ENCODE measurements at regions of chr11 and their contacts with region 1.

Region 1: DNA sequence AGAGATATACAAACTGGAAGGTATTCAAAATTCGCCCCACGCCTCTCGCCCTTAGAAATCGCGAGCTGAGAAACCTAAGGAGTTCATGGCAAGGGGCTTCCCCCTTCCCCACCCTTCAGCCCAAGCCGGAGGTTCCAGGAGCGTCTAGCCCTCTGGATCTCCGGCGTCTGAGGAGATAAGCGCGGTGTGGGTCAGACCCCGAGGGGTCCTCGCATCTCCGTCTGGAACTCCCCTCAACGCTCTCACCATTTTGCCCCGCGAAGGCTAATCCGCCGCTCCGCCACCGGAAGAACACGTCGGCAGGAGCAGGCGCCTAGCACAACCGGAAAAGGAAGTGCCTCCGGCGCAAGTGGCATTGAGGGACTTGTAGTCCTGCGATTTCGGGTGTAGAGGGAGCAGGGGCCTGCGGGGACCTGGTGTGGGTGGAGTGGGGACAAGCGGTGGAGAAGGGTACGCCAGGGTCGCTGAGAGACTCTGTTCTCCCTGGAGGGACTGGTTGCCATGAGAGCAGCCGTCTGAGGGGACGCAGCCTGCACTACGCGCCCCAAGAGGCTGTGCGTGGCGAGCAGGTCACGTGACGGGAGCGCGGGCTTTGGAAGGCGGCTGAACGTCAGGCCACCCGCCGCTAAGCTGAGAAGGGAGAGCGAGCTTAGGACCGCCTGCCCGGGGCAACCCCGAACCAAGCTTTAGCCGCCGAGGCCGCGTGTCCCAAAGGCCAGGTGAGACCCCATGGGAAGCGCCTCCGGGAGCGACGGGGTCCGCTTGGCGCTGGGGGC is at the starts of genes FEN1 and TMEM258:
- DNase-seq: peak; percentile 71 to 94 (median 88)
- ATAC-seq: peak; percentile 87
- H3K4me3 ChIP-seq: peak within 1 kb of the TSS; percentile 64 to 92
- H3K4me3 Mint-ChIP-seq: peak within 1 kb of the TSS; percentile 93
- H3K27ac ChIP-seq: peak within 1 kb of the TSS; percentile 88 to 96
- H3K27ac Mint-ChIP-seq: peak within 1 kb of the TSS; percentile 97
- H3K4me1 ChIP-seq: peaks cover 15% of the 10 kb centered on the region
- H3K4me1 Mint-ChIP-seq: peaks cover 37% of the 10 kb centered on the region
- H3K27me3 ChIP-seq: no peaks in the 10 kb centered on the region
- H3K27me3 Mint-ChIP-seq: no peaks in the 10 kb centered on the region
- CTCF ChIP-seq: no peak
- total RNA-seq, gene FEN1: 12.9 to 15.2 TPM
- total RNA-seq, gene TMEM258: 48.1 to 53.9 TPM

Region 2: GRCh38 chr11:61718621-61719302 is 73.7 kb before region 1 on chr11:
- CTCF ChIA-PET with region 1: no interaction called
- POLR2A ChIA-PET with region 1: no interaction called
- intact Hi-C with region 1: no loop called
- DNase-seq: no peak
- ATAC-seq: no peak
- H3K4me3 ChIP-seq: no peak overlapping the region
- H3K4me3 Mint-ChIP-seq: no peak overlapping the region
- H3K27ac ChIP-seq: no peak overlapping the region
- H3K27ac Mint-ChIP-seq: no peak overlapping the region
- H3K4me1 ChIP-seq: no peaks in the 10 kb centered on the region
- H3K4me1 Mint-ChIP-seq: no peaks in the 10 kb centered on the region
- H3K27me3 ChIP-seq: no peaks in the 10 kb centered on the region
- H3K27me3 Mint-ChIP-seq: no peaks in the 10 kb centered on the region
- CTCF ChIP-seq: no peak

Region 3: GRCh38 chr11:61776551-61777075 is 15.9 kb before region 1 on chr11:
- CTCF ChIA-PET with region 1: interaction called, 5 read pairs
- POLR2A ChIA-PET with region 1: interaction called, 6 read pairs
- intact Hi-C with region 1: loop called in 1 of 2 experiments (anchors 1 kb)
- DNase-seq: peak in 7 of 9 experiments; percentile 34 to 68 (median 59)
- ATAC-seq: peak; percentile 48
- H3K4me3 ChIP-seq: peak overlapping the region in 1 of 2 experiments; percentile 52
- H3K4me3 Mint-ChIP-seq: peak overlapping the region; percentile 69
- H3K27ac ChIP-seq: no peak overlapping the region
- H3K27ac Mint-ChIP-seq: peak overlapping the region; percentile 35
- H3K4me1 ChIP-seq: peaks cover 20% of the 10 kb centered on the region
- H3K4me1 Mint-ChIP-seq: peaks cover 12% of the 10 kb centered on the region
- H3K27me3 ChIP-seq: no peaks in the 10 kb centered on the region
- H3K27me3 Mint-ChIP-seq: peaks cover 2% of the 10 kb centered on the region
- CTCF ChIP-seq: peak; percentile 63

Region 4: DNA sequence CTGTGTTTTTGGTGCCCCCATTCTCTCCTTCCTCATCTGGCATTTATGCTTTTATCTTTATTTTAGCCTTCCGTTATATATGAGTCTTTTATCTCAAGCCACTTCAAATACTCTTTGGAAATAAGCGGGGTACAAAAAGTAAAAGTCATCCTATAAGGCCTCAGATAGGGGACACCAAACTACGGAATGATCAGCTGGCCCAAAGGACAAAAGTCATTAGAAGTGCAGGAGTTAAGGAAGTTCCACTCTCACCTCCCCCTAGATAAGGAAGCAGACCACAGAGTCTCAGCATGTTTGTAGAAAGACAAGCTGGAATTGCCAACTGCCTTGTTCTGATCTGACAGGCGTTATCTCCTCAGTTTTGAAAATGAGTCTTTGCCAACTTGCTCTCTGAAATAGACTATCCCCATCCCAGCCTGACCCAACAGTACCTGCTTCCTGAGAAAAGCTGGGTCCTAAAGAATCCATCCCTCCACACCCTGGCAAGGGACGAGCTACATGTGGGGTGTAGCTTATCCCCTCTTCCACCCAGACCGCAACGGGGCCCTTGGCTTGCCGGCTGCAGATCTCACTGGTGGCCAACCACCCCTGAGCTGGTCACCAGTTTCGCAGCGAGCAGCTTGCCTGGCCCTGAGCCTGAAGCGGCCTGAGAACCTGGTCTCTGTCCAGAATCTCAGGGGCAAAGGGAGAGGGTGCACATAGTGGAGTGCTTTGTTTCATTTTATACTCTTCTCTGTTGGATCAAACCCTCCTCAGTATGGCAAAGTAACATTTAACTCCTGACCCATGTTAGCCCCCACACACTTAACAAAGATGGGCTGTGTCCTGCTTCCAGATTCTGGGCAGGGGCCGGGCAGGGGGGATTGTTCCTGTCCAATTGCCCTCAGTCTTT is 49.4 kb after region 1 on chr11:
- CTCF ChIA-PET with region 1: interaction called, 10 read pairs
- POLR2A ChIA-PET with region 1: interaction called, 3 read pairs
- intact Hi-C with region 1: no loop called
- DNase-seq: no peak
- ATAC-seq: no peak
- H3K4me3 ChIP-seq: no peak overlapping the region
- H3K4me3 Mint-ChIP-seq: no peak overlapping the region
- H3K27ac ChIP-seq: no peak overlapping the region
- H3K27ac Mint-ChIP-seq: no peak overlapping the region
- H3K4me1 ChIP-seq: no peaks in the 10 kb centered on the region
- H3K4me1 Mint-ChIP-seq: peaks cover 3% of the 10 kb centered on the region
- H3K27me3 ChIP-seq: no peaks in the 10 kb centered on the region
- H3K27me3 Mint-ChIP-seq: no peaks in the 10 kb centered on the region
- CTCF ChIP-seq: no peak

Region 5: DNA sequence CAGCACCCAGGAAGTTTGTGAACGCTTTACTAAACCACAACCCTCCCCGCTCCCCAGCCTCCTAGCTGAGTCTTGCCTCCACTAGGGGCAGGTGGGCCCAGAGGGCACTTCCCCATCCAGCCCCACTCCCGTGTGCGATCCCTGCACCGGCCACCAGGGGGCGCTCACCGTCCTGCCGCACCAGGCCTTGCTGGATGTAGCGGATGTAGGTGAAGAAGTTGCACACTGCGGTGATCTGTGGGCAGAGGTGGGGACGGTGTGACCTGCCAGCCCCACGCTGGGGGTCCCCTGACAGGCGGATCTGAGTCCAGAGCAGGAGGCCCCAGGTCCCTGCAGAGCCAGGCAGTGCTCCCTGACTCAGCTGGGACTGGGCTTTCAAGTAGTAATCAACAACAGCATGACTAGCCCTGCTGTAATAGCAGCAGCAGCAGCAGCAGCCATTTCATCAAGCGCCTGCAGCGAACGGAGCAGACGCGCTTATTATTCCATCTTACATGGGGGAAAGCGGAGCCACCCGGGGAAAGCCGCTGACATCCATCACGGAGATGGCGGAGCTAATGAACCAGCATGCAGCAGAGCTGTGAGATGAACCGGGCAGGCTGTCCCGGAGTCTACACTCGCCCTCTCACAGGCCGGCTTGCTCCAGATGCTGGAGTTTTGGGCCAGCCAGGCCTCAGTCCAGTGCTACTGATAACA is 106.8 kb after region 1 on chr11:
- CTCF ChIA-PET with region 1: interaction called, 69 read pairs
- POLR2A ChIA-PET with region 1: interaction called, 3 read pairs
- intact Hi-C with region 1: loop called (anchors 1 kb)
- DNase-seq: peak; percentile 89 to 98 (median 92)
- ATAC-seq: peak; percentile 96
- H3K4me3 ChIP-seq: no peak overlapping the region
- H3K4me3 Mint-ChIP-seq: no peak overlapping the region
- H3K27ac ChIP-seq: no peak overlapping the region
- H3K27ac Mint-ChIP-seq: peak overlapping the region; percentile 3
- H3K4me1 ChIP-seq: peaks cover 5% of the 10 kb centered on the region
- H3K4me1 Mint-ChIP-seq: peaks cover 6% of the 10 kb centered on the region
- H3K27me3 ChIP-seq: no peaks in the 10 kb centered on the region
- H3K27me3 Mint-ChIP-seq: peaks cover 5% of the 10 kb centered on the region
- CTCF ChIP-seq: peak; percentile 98

Region 6: DNA sequence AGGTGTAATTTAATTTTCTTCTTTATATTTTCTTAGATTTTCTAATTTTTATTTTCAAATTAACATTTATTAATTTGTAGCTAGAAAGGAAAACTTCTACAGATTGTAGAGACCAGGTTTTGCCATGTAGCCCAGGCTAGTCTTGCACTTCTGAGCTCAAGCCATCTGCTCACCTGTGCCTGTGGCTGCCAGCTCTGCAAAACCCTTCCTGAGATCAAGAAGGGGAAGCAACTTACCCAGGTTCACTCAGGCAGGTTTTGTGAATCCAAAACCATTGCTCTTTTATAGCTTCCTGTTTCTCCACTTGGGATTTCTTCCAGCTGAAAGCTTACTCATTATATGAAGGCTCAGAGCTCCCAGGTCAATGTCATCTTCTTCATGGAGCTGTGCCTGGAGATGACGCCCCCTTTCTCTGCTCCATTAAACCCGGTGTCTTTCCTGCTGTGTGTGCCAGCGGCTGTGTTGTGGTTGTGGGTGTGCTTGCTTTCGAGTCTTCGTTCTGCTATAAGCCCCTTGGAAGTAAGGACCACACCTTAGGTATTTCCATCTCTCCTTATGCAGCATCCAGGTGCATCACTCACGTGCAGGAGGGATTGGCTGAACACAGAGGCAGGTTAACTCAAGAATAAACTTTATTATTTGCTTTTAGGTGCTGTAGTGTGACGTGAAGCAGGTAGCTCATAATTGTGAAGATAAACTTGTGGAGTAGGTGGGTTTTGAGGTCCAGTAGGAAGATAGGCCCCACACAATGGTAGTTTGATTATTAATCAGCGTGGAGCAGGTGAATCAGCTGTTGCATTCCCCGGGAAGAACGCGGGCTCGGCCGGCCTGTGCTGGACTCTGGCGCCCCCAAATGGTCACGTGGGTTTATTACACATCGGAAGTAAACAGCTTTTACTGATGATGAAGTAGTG is 289.1 kb after region 1 on chr11:
- CTCF ChIA-PET with region 1: interaction called, 81 read pairs
- POLR2A ChIA-PET with region 1: interaction called, 3 read pairs
- intact Hi-C with region 1: loop called (anchors 1 to 2 kb)
- DNase-seq: peak; percentile 66 to 89 (median 80)
- ATAC-seq: peak; percentile 92
- H3K4me3 ChIP-seq: no peak overlapping the region
- H3K4me3 Mint-ChIP-seq: peak overlapping the region; percentile 59
- H3K27ac ChIP-seq: no peak overlapping the region
- H3K27ac Mint-ChIP-seq: peak overlapping the region; percentile 37
- H3K4me1 ChIP-seq: no peaks in the 10 kb centered on the region
- H3K4me1 Mint-ChIP-seq: peaks cover 7% of the 10 kb centered on the region
- H3K27me3 ChIP-seq: no peaks in the 10 kb centered on the region
- H3K27me3 Mint-ChIP-seq: no peaks in the 10 kb centered on the region
- CTCF ChIP-seq: peak; percentile 94

Region 7: DNA sequence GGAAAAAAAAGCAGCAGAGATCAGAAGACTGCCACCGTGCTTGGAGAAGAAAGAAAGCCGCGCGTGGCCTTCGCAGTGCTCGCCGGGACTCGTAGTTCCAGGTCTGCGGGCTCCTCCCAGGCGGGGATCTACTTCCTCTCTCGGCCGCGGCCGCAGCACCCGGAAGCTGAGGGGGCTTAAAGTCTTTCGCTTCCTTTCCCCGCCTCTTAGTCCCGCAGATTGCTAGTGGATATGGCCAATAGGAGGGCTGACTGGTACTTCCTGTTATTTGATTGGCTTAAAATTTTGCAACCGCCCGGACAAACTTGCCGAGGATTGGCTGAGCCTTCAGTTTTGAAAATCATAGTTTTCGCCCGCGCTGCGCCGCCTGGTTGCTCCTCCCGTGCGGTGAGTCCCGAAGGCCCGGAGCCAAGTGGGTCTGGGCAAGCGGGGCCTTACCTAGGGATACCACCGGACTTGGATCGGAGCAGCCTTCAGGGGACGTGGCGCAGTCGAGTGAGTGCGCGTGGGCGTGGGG is 331.2 kb after region 1 on chr11 and contains the start of gene INCENP:
- CTCF ChIA-PET with region 1: interaction called, 3 read pairs
- POLR2A ChIA-PET with region 1: no interaction called
- intact Hi-C with region 1: loop called (anchors 1 kb)
- DNase-seq: peak; percentile 90 to 98 (median 94)
- ATAC-seq: peak; percentile 98
- H3K4me3 ChIP-seq: peak within 1 kb of the TSS; percentile 78 to 97
- H3K4me3 Mint-ChIP-seq: peak within 1 kb of the TSS; percentile 92
- H3K27ac ChIP-seq: peak within 1 kb of the TSS; percentile 50 to 51
- H3K27ac Mint-ChIP-seq: peak within 1 kb of the TSS; percentile 84
- H3K4me1 ChIP-seq: peaks cover 18% of the 10 kb centered on the region
- H3K4me1 Mint-ChIP-seq: peaks cover 30% of the 10 kb centered on the region
- H3K27me3 ChIP-seq: no peaks in the 10 kb centered on the region
- H3K27me3 Mint-ChIP-seq: no peaks in the 10 kb centered on the region
- CTCF ChIP-seq: no peak
- total RNA-seq, gene INCENP: 11.6 to 16.1 TPM

Region 8: GRCh38 chr11:62157603-62158002 is 365.1 kb after region 1 on chr11:
- CTCF ChIA-PET with region 1: no interaction called
- POLR2A ChIA-PET with region 1: no interaction called
- intact Hi-C with region 1: no loop called
- DNase-seq: no peak
- ATAC-seq: no peak
- H3K4me3 ChIP-seq: no peak overlapping the region
- H3K4me3 Mint-ChIP-seq: no peak overlapping the region
- H3K27ac ChIP-seq: no peak overlapping the region
- H3K27ac Mint-ChIP-seq: no peak overlapping the region
- H3K4me1 ChIP-seq: no peaks in the 10 kb centered on the region
- H3K4me1 Mint-ChIP-seq: no peaks in the 10 kb centered on the region
- H3K27me3 ChIP-seq: no peaks in the 10 kb centered on the region
- H3K27me3 Mint-ChIP-seq: peaks cover 29% of the 10 kb centered on the region
- CTCF ChIP-seq: no peak